ENCODE measurements at regions of chr7 and their contacts with region 1.

Region 1: DNA sequence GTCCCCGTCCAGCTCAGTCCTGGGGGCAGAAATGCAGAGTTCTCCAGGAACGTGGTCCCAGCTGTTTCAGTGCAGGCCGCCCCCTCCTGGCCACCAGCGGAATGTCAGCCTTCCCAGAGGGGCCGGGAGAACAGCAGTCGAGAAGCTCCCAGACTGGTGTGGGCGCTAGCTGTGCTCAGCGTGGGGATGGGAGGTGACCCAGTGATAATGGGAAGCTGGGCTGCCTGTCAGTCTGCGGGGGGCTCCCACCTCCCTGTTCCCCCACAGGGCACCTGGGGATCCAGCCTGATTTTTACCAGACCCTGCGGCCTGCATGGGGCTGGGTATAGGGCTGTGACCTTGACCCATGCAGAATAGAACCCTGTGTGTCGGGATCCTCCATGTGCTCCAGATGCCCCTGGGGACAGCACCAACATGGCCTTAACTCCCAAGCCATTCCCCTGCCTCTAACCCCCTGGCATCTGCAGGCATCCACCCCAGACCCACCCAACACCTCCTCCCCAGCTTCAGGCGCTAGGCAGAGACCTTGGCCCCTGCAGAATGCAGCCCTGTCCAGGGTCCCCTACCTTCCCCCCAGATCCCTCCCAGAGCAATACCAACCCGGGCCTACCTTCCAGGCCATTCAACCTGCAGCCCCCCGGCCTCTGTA is 946 bp upstream of the ELN start:
- DNase-seq: no peak
- H3K4me3 ChIP-seq: peak overlapping the region; percentile 55 to 65
- H3K27ac ChIP-seq: peak overlapping the region; percentile 91
- H3K4me1 ChIP-seq: peaks cover 76% of the 10 kb centered on the region
- H3K27me3 ChIP-seq: no peaks in the 10 kb centered on the region
- CTCF ChIP-seq: peak; percentile 88 to 93 (median 93)
- POLR2A ChIP-seq: no peak

Region 2: GRCh38 chr7:73433924-73434700 is 592.9 kb before region 1 on chr7:
- intact Hi-C with region 1: no loop called
- DNase-seq: no peak
- H3K4me3 ChIP-seq: peak overlapping the region; percentile 33 to 48
- H3K27ac ChIP-seq: no peak overlapping the region
- H3K4me1 ChIP-seq: peaks cover 8% of the 10 kb centered on the region
- H3K27me3 ChIP-seq: no peaks in the 10 kb centered on the region
- CTCF ChIP-seq: no peak
- POLR2A ChIP-seq: no peak

Region 3: GRCh38 chr7:73894733-73895551 is 132.1 kb before region 1 on chr7:
- intact Hi-C with region 1: loop called (anchors 2 kb)
- DNase-seq: peak in 1 of 2 donors; percentile 97
- H3K4me3 ChIP-seq: no peak overlapping the region
- H3K27ac ChIP-seq: peak overlapping the region; percentile 62
- H3K4me1 ChIP-seq: peaks cover 55% of the 10 kb centered on the region
- H3K27me3 ChIP-seq: no peaks in the 10 kb centered on the region
- CTCF ChIP-seq: no peak
- POLR2A ChIP-seq: no peak

Region 4: GRCh38 chr7:73992101-73992562 is 34.9 kb before region 1 on chr7:
- intact Hi-C with region 1: loop called (anchors 5 kb)
- DNase-seq: no peak
- H3K4me3 ChIP-seq: no peak overlapping the region
- H3K27ac ChIP-seq: peak overlapping the region; percentile 72
- H3K4me1 ChIP-seq: peaks cover 17% of the 10 kb centered on the region
- H3K27me3 ChIP-seq: no peaks in the 10 kb centered on the region
- CTCF ChIP-seq: no peak
- POLR2A ChIP-seq: no peak